ENCODE measurements at regions of chr17 and their contacts with region 1.

Region 1: DNA sequence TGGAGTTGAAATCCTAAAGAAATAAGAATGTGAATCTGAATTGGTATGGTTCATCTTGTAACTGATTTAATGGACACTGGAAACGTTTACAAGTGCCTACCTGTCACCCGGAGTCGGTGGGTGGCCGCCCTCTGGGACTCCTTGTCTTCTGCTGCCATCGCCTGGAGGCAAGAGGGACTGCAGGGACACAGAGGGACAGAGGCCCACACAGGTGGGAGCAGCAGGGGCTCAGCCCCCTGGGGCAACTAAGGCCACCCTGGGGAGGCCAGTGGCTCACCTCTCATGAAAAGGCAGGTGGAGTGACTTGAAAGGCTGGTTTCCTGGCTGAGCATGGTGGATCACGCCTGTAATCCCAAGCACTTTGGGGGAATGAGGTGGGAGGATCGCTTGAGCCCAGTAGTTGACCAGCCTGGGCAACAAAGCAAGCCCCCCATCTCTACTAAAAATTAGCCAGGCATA is 23.2 kb downstream of the TMEM92 start:
- DNase-seq: peak; percentile 81
- H3K27ac ChIP-seq: no peak overlapping the region
- CTCF ChIP-seq: peak; percentile 98

Region 2: GRCh38 chr17:50169121-50169764 is 128.2 kb before region 1 on chr17:
- CTCF ChIA-PET with region 1: interaction called, 14 read pairs
- POLR2A ChIA-PET with region 1: no interaction called
- DNase-seq: peak; percentile 57
- H3K27ac ChIP-seq: peak overlapping the region; percentile 33; the same call in 1 of the 2 replicates
- CTCF ChIP-seq: peak; percentile 95

Region 3: GRCh38 chr17:50318501-50319285 is 21.3 kb after region 1 on chr17:
- CTCF ChIA-PET with region 1: interaction called, 18 read pairs
- POLR2A ChIA-PET with region 1: no interaction called
- DNase-seq: peak; percentile 54
- H3K27ac ChIP-seq: peak overlapping the region; percentile 77
- CTCF ChIP-seq: no peak

Region 4: GRCh38 chr17:50355506-50356341 is 58.3 kb after region 1 on chr17:
- CTCF ChIA-PET with region 1: no interaction called
- POLR2A ChIA-PET with region 1: no interaction called
- DNase-seq: no peak
- H3K27ac ChIP-seq: peak overlapping the region; percentile 28
- CTCF ChIP-seq: no peak

Measured in RWPE1 (cell line).